GM12878 (cell line): ENCODE measurements at regions of chr3 and their contacts with region 1.

Region 1: GRCh38 chr3:129650256-129650872 is 43.9 kb upstream of the PLXND1 start:
- DNase-seq: no peak
- ATAC-seq: peak; percentile 85
- H3K4me3 ChIP-seq: no peak overlapping the region
- H3K27ac ChIP-seq: no peak overlapping the region
- H3K4me1 ChIP-seq: no peaks in the 10 kb centered on the region
- H3K27me3 ChIP-seq: no peaks in the 10 kb centered on the region
- CTCF ChIP-seq: peak; percentile 63 to 82 (median 69); a peak in 5 of 6 replicates
- EP300 ChIP-seq: no peak
- POLR2A ChIP-seq: no peak
- RAD21 ChIP-seq: peak; percentile 89

Region 2: GRCh38 chr3:129627429-129628168 is 22.8 kb before region 1 on chr3:
- CTCF ChIA-PET with region 1: interaction called, 12 read pairs
- POLR2A ChIA-PET with region 1: interaction called, 8 read pairs
- RAD21 ChIA-PET with region 1: no interaction called
- SMC1A ChIA-PET with region 1: interaction called, 3 read pairs
- in situ Hi-C with region 1: no loop called
- intact Hi-C with region 1: no loop called
- DNase-seq: peak; percentile 45
- ATAC-seq: peak; percentile 68
- H3K4me3 ChIP-seq: peak overlapping the region; percentile 84
- H3K27ac ChIP-seq: peak overlapping the region; percentile 65
- H3K4me1 ChIP-seq: no peaks in the 10 kb centered on the region; the same call in 1 of the 2 replicates
- H3K27me3 ChIP-seq: no peaks in the 10 kb centered on the region; a peak in 1 of 4 replicates
- CTCF ChIP-seq: peak; percentile 85 to 92 (median 90)
- EP300 ChIP-seq: no peak
- POLR2A ChIP-seq: no peak
- RAD21 ChIP-seq: peak; percentile 90

Region 3: DNA sequence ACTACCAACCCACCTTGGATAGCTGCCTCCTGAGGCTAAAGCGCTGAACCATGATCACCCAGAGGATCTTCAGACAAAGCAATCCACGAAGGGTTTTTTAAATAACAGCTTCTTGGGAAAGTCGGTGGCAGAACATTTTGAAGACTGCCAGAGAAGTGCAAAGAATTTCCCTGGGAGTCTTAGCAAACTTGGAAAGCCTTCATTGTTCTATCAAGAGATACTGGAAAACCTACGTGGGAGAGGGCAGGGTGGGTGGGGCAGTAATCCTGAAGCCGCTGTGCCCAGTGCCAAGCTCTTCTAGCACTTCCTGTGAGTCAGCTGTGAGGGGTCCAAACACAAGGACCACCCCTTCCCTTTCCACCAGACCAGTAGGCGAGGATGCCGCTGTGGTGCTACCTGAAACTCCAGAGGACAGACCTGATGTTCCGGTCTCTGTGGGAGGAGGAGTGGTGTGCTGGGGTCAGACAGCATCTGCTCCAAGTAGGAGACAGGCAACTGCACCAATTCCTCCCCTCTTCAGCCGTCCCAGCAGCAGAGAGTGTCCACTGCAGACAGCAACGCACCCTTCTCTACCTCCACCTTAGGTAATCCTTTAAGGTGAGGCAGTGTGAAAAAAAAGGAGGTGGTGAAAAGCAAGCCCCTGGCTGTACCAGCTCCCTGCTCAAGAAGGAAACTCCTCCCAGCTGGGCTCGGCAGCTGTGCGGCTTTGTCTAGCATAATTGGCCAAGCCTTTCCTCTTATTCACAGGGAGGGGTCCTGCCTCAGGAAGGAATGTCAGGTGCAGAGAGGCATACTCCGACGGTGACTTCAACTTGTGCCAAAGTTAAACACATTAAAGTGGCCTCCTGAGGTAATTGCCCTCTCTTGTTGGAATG is 144.2 kb after region 1 on chr3:
- CTCF ChIA-PET with region 1: no interaction called
- POLR2A ChIA-PET with region 1: no interaction called
- RAD21 ChIA-PET with region 1: no interaction called
- SMC1A ChIA-PET with region 1: no interaction called
- in situ Hi-C with region 1: no loop called
- intact Hi-C with region 1: no loop called
- DNase-seq: no peak
- ATAC-seq: peak; percentile 38
- H3K4me3 ChIP-seq: no peak overlapping the region
- H3K27ac ChIP-seq: no peak overlapping the region
- H3K4me1 ChIP-seq: peaks cover 16% of the 10 kb centered on the region
- H3K27me3 ChIP-seq: no peaks in the 10 kb centered on the region
- CTCF ChIP-seq: no peak
- EP300 ChIP-seq: no peak
- POLR2A ChIP-seq: no peak
- RAD21 ChIP-seq: no peak

Region 4: DNA sequence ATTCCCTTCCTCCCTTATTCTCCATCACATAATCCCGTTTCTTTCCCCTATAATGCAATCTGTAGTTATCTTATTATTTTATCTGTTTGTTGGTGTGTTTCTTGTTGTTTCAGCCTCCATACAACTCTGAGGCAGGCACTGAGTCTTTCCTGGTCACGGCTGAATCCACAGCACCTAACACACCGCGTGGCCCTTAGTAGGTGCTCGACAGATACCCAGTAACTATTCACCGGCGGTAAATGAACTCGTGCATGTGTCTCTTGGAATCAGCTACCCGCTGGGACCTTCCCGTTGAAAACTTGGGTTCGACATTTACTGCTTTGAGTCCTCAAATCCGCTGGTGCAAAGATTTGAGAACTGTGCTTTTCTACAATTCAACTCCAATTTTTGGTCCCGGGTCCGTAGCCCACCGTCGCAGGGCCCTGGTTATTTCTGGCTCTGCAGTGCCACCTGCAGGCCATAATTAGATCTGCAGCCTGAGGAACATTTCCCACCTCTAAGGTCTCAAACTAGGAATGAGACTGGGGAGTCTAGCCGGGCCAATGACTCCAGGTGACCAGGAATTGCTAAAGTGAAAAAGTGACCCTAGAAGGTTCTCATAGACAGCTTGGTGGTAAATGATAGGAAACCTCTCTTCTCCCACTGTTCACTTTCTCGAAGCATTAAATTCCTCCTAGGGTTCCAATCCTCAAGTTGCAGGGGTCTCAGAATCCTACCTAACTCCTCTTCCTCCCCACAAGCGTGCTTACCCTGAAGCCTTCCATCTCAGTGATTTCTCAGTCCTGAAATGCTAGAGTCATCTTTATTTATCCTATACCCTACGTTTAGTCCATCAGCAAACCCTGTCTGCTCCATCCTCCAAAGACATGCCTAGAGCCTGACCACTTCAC is 284.1 kb after region 1 on chr3:
- CTCF ChIA-PET with region 1: interaction called, 8 read pairs
- POLR2A ChIA-PET with region 1: interaction called, 4 read pairs
- RAD21 ChIA-PET with region 1: interaction called, 6 read pairs
- SMC1A ChIA-PET with region 1: interaction called, 4 read pairs
- in situ Hi-C with region 1: loop called (anchors 5 kb)
- intact Hi-C with region 1: loop called (anchors 1 kb)
- DNase-seq: no peak
- ATAC-seq: peak; percentile 63
- H3K4me3 ChIP-seq: no peak overlapping the region
- H3K27ac ChIP-seq: no peak overlapping the region
- H3K4me1 ChIP-seq: no peaks in the 10 kb centered on the region
- H3K27me3 ChIP-seq: no peaks in the 10 kb centered on the region
- CTCF ChIP-seq: peak; percentile 82 to 86 (median 85)
- EP300 ChIP-seq: no peak
- POLR2A ChIP-seq: no peak
- RAD21 ChIP-seq: peak; percentile 92

Region 5: GRCh38 chr3:130014526-130014925 is 364.2 kb after region 1 on chr3:
- CTCF ChIA-PET with region 1: no interaction called
- POLR2A ChIA-PET with region 1: no interaction called
- RAD21 ChIA-PET with region 1: no interaction called
- SMC1A ChIA-PET with region 1: no interaction called
- in situ Hi-C with region 1: no loop called
- intact Hi-C with region 1: loop called (anchors 10 kb)
- DNase-seq: no peak
- ATAC-seq: no peak
- H3K4me3 ChIP-seq: no peak overlapping the region
- H3K27ac ChIP-seq: no peak overlapping the region
- H3K4me1 ChIP-seq: no peaks in the 10 kb centered on the region
- H3K27me3 ChIP-seq: no peaks in the 10 kb centered on the region; a peak in 1 of 4 replicates
- CTCF ChIP-seq: no peak
- EP300 ChIP-seq: no peak
- POLR2A ChIP-seq: no peak
- RAD21 ChIP-seq: no peak